K562 (cell line): ENCODE measurements at regions of chr18 and their contacts with region 1.

Region 1: GRCh38 chr18:3652380-3653262 is 202.6 kb downstream of the TGIF1 start:
- DNase-seq: peak; percentile 97 to 100 (median 98)
- ATAC-seq: peak; percentile 86
- H3K4me3 ChIP-seq: peak overlapping the region; percentile 43
- H3K27ac ChIP-seq: peak overlapping the region; percentile 83
- H3K4me1 ChIP-seq: peaks cover 57 to 64% of the 10 kb centered on the region in 2 experiments
- H3K27me3 ChIP-seq: no peaks in the 10 kb centered on the region; a peak in 1 of 5 replicates
- CTCF ChIP-seq: peak in 2 of 3 experiments; percentile 9 to 43; a peak in 3 of 6 replicates
- EP300 ChIP-seq: peak; percentile 99
- POLR2A ChIP-seq: no peak
- RAD21 ChIP-seq: peak in 1 of 2 experiments; percentile 29; a peak in 3 of 4 replicates

Region 2: GRCh38 chr18:3634250-3634939 is 18.2 kb before region 1 on chr18:
- CTCF ChIA-PET with region 1: interaction called, 7 read pairs
- POLR2A ChIA-PET with region 1: interaction called, 14 read pairs
- in situ Hi-C with region 1: no loop called
- intact Hi-C with region 1: no loop called
- DNase-seq: no peak
- ATAC-seq: no peak
- H3K4me3 ChIP-seq: no peak overlapping the region
- H3K27ac ChIP-seq: no peak overlapping the region
- H3K4me1 ChIP-seq: peaks cover 15 to 17% of the 10 kb centered on the region in 2 experiments
- H3K27me3 ChIP-seq: no peaks in the 10 kb centered on the region
- CTCF ChIP-seq: no peak
- EP300 ChIP-seq: no peak
- POLR2A ChIP-seq: no peak
- RAD21 ChIP-seq: no peak

Region 3: GRCh38 chr18:4181882-4182568 is 529.4 kb after region 1 on chr18:
- CTCF ChIA-PET with region 1: no interaction called
- POLR2A ChIA-PET with region 1: no interaction called
- in situ Hi-C with region 1: no loop called
- intact Hi-C with region 1: no loop called
- DNase-seq: no peak
- ATAC-seq: no peak
- H3K4me3 ChIP-seq: no peak overlapping the region
- H3K27ac ChIP-seq: no peak overlapping the region
- H3K4me1 ChIP-seq: no peaks in the 10 kb centered on the region
- H3K27me3 ChIP-seq: no peaks in the 10 kb centered on the region
- CTCF ChIP-seq: peak in 1 of 3 experiments; percentile 10; a peak in 1 of 6 replicates
- EP300 ChIP-seq: no peak
- POLR2A ChIP-seq: no peak
- RAD21 ChIP-seq: peak in 1 of 2 experiments; percentile 27; a peak in 1 of 4 replicates

Region 4: DNA sequence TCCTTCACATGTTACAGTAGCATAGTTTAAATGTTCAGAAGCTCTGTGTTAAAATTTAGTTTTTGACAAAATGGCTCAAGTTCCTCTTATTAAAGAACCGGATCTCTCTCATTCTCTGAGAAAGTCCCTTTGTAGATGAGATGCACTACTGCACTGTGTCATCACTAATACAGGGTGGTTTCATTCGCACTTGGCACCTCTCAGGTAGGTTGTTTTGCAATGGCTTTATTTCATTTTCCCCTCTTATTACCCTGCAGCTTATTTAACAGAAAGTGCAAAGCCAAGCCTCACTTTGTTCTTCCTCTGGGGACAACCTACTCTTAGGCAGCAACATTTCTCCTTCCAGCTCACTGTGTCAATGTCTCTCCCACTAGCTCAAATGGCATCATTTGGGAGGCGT is 617.4 kb after region 1 on chr18:
- CTCF ChIA-PET with region 1: no interaction called
- POLR2A ChIA-PET with region 1: no interaction called
- in situ Hi-C with region 1: no loop called
- intact Hi-C with region 1: no loop called
- DNase-seq: no peak
- ATAC-seq: no peak
- H3K4me3 ChIP-seq: no peak overlapping the region
- H3K27ac ChIP-seq: no peak overlapping the region
- H3K4me1 ChIP-seq: no peaks in the 10 kb centered on the region
- H3K27me3 ChIP-seq: no peaks in the 10 kb centered on the region
- CTCF ChIP-seq: no peak
- EP300 ChIP-seq: no peak
- POLR2A ChIP-seq: no peak
- RAD21 ChIP-seq: no peak